ENCODE measurements at regions of chr15 and their contacts with region 1.

Region 1: DNA sequence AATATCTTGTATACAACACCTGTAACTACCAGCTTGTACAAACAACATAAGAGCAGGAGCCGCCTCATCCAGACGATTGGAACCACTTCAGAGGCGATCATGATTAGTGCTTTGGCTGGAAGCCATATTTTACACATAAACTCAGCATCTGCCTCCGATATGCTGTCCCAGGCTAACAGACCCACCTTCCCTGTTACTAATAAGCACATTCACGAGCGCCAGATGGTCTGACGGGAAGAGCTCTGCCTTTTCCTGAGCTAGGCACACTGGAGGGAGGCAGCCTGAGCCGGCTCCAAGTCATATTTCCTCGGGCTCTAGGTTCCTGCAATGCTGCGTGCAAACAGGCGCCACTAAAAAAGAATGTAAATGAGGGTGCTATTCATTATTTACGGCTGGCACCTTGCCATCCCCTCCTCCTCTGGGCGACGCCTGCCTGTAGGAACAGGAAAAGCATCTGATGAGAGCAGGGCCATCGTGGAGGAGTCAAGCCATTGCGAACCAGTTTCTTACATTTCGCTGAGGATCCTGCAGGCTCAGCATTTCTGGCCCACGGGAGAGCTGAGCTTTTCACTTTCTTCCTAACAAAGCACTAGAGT is 98.2 kb downstream of the ANXA2 start:
- DNase-seq: peak; percentile 86
- H3K4me3 Mint-ChIP-seq: no peak overlapping the region
- H3K27ac Mint-ChIP-seq: no peak overlapping the region
- H3K4me1 Mint-ChIP-seq: peaks cover 4% of the 10 kb centered on the region
- H3K27me3 Mint-ChIP-seq: no peaks in the 10 kb centered on the region
- CTCF ChIP-seq: no peak

Region 2: DNA sequence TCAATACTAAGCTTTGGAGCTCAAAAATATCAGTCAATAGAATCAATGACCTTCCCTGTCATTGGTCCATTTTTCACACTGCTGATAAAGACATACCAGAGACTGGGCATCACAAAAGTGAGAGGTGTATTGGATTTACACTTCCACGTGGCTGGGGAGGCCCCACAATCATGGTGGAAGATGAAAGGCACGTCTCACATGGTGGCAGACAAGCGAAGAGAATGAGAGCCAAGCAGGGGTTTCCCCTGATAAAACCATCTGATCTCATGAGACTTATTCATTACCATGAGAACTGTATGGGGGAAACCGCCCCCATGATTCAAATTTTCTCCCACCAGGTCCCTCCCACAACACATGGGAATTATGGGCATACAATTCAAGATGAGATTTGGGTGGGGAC is 16.3 kb after region 1 on chr15:
- CTCF ChIA-PET with region 1: interaction called, 4 read pairs
- POLR2A ChIA-PET with region 1: interaction called, 20 read pairs
- intact Hi-C with region 1: no loop called
- DNase-seq: no peak
- H3K4me3 Mint-ChIP-seq: no peak overlapping the region
- H3K27ac Mint-ChIP-seq: peak overlapping the region; percentile 63
- H3K4me1 Mint-ChIP-seq: peaks cover 8% of the 10 kb centered on the region
- H3K27me3 Mint-ChIP-seq: no peaks in the 10 kb centered on the region
- CTCF ChIP-seq: no peak

Measured in MCF 10A (cell line).